ENCODE measurements at regions of chr4 and their contacts with region 1.

Region 1: GRCh38 chr4:2024683-2025082 is 15.9 kb upstream of the NELFA start:
- DNase-seq: no peak
- ATAC-seq: no peak
- H3K4me3 ChIP-seq: no peak overlapping the region
- H3K27ac ChIP-seq: no peak overlapping the region
- H3K4me1 ChIP-seq: no peaks in the 10 kb centered on the region
- H3K27me3 ChIP-seq: no peaks in the 10 kb centered on the region
- CTCF ChIP-seq: no peak

Region 2: GRCh38 chr4:2186133-2186864 is 161.6 kb after region 1 on chr4:
- CTCF ChIA-PET with region 1: no interaction called
- POLR2A ChIA-PET with region 1: no interaction called
- intact Hi-C with region 1: loop called (anchors 10 kb)
- DNase-seq: peak; percentile 60
- ATAC-seq: peak; percentile 68
- H3K4me3 ChIP-seq: no peak overlapping the region
- H3K27ac ChIP-seq: no peak overlapping the region
- H3K4me1 ChIP-seq: no peaks in the 10 kb centered on the region
- H3K27me3 ChIP-seq: no peaks in the 10 kb centered on the region
- CTCF ChIP-seq: peak; percentile 74